ENCODE measurements at regions of chr7 and their contacts with region 1.

Region 1: DNA sequence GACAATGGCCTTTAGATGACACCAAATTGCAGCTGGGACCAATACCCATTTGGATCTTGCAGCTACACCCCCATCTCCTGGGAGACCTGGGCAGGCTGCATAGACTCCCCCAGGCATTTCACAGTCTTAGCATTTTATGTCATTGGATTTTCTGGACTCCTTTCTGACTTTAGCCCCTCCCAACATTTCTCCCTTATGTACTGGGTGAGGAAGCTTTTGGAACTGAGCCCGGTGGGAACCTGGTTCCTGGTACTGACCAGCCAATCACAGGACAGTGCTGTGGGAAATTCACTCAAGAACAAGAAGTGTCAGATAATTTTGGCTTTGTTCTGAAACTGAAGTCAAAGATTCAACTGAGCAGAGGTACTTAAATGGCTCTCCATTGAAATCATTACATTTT is 177.7 kb downstream of the ACTR3B start:
- DNase-seq: no peak
- ATAC-seq: no peak
- H3K4me3 ChIP-seq: no peak overlapping the region
- H3K27ac ChIP-seq: no peak overlapping the region
- H3K4me1 ChIP-seq: no peaks in the 10 kb centered on the region
- H3K27me3 ChIP-seq: no peaks in the 10 kb centered on the region; the same call in 1 of the 2 replicates
- CTCF ChIP-seq: no peak

Region 2: GRCh38 chr7:153245809-153246208 is 308.5 kb after region 1 on chr7:
- CTCF ChIA-PET with region 1: no interaction called
- POLR2A ChIA-PET with region 1: no interaction called
- in situ Hi-C with region 1: no loop called
- intact Hi-C with region 1: no loop called
- DNase-seq: no peak
- ATAC-seq: no peak
- H3K4me3 ChIP-seq: no peak overlapping the region
- H3K27ac ChIP-seq: no peak overlapping the region
- H3K4me1 ChIP-seq: no peaks in the 10 kb centered on the region
- H3K27me3 ChIP-seq: no peaks in the 10 kb centered on the region
- CTCF ChIP-seq: no peak

Region 3: DNA sequence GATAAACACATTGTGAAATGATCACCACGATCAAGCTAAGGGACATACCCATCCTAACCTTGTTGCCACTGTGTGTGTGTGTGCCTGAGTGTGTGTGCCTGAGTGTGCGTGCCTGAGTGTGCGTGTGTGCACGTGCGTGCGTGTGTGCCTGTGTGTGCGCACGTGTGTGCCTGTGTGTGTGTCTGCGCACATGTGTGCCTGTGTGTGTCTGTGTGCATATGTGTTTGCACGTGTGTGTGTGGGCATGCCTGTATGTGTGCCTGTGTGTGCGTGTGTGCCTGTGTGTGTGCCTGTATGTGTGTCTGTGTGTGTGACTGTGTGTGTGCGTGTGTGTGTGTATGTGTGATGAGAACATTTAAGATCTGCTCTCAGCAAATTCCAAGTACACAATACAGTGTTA is 870.8 kb after region 1 on chr7:
- CTCF ChIA-PET with region 1: no interaction called
- POLR2A ChIA-PET with region 1: no interaction called
- in situ Hi-C with region 1: no loop called
- intact Hi-C with region 1: no loop called
- DNase-seq: no peak
- ATAC-seq: no peak
- H3K4me3 ChIP-seq: no peak overlapping the region
- H3K27ac ChIP-seq: no peak overlapping the region
- H3K4me1 ChIP-seq: no peaks in the 10 kb centered on the region
- H3K27me3 ChIP-seq: no peaks in the 10 kb centered on the region
- CTCF ChIP-seq: no peak

Region 4: DNA sequence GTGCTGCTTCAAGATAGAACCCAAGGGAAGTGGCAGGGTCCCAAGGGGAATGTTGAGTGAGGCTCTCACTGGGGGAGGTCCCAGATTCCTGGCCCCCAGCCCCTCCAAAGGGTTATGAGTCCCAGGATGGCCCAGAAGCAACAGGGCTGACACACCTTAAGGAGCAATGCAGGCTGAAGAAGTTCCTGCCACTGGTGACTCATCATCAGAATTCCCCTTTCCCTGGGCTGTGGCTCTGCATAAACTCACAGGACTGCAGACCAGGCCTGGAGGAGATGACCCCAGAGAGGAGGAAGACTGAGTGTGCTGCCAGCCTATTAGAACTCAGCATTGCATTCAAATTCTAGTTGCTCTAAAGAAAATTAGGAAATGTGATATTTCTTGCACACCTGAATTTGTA is 1241.6 kb after region 1 on chr7:
- CTCF ChIA-PET with region 1: no interaction called
- POLR2A ChIA-PET with region 1: interaction called, 13 read pairs
- in situ Hi-C with region 1: no loop called
- intact Hi-C with region 1: no loop called
- DNase-seq: no peak
- ATAC-seq: no peak
- H3K4me3 ChIP-seq: no peak overlapping the region
- H3K27ac ChIP-seq: no peak overlapping the region
- H3K4me1 ChIP-seq: no peaks in the 10 kb centered on the region
- H3K27me3 ChIP-seq: no peaks in the 10 kb centered on the region; the same call in 1 of the 2 replicates
- CTCF ChIP-seq: no peak

Measured in Panc1 (cell line).